ENCODE measurements at regions of chr7 and their contacts with region 1.

Region 1: DNA sequence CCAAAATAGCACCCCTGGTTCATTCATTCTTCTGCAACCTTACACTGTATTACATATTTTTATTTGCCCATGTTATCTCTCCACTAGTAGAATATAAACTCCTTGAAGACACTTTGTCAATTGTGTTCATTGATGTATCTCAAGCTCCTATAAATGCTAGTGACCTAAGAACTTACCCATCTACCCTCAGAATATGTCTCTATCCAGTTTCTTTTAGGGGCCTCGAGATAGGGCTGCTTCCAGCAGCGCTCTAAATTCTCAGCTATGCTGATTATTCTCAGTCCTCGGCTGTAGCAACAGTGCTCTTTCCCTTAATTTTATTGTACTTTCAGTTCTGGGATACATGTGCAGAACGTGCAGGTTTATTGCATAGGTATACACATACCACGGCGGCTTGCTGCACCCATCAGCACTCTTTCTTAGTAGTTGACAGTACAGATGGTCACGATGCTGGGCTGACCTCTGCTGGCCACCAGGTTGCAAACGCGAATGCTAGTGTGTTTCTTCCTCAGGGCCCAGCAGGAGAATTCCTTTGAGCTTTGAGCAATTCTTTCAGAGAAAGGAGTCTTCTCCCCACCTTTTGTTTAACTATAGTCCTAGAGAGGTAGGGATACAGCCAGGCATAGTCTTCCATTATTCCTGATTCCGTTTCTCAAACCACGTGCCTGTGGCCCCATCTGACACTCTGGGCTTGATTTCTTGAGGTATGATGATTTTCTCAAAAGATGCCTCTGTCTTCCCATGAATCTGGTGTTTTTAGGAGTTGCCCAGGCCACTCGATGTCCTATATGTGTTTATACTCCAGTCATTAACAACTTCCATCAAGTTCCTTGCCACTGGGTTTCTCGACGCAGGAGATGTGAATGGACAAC is 49.1 kb upstream of the CDC14C start:
- DNase-seq: peak; percentile 77 to 78
- H3K4me3 ChIP-seq: no peak overlapping the region
- H3K4me1 ChIP-seq: no peaks in the 10 kb centered on the region; the same call in 1 of the 2 replicates
- H3K27me3 ChIP-seq: no peaks in the 10 kb centered on the region

Region 2: DNA sequence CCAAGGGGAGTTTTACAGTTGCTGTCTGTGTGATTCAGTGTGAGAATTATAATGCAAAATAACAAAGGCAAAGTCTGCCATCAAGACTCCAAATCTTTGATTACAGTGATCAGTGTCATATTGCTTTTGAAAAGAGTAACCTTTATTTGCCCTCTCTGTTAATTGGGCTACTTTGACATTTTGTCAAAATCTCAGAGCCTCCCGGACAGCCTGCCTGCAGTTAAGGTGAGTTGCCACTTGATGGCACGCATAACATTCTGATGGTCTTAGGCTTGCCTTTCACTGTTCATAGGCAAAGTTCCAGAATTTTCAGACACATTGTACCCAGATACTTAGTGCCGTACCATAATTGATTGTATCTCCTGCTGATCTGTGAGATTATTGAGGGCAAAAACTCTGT is 450.6 kb before region 1 on chr7:
- in situ Hi-C with region 1: loop called (anchors 5 kb)
- DNase-seq: peak; percentile 60 to 65
- H3K4me3 ChIP-seq: no peak overlapping the region
- H3K4me1 ChIP-seq: peaks cover 6% of the 10 kb centered on the region; the same call in 1 of the 2 replicates
- H3K27me3 ChIP-seq: no peaks in the 10 kb centered on the region

Region 3: GRCh38 chr7:49060743-49061142 is 185.5 kb after region 1 on chr7:
- in situ Hi-C with region 1: no loop called
- DNase-seq: no peak
- H3K4me3 ChIP-seq: no peak overlapping the region
- H3K4me1 ChIP-seq: no peaks in the 10 kb centered on the region
- H3K27me3 ChIP-seq: no peaks in the 10 kb centered on the region

Region 4: DNA sequence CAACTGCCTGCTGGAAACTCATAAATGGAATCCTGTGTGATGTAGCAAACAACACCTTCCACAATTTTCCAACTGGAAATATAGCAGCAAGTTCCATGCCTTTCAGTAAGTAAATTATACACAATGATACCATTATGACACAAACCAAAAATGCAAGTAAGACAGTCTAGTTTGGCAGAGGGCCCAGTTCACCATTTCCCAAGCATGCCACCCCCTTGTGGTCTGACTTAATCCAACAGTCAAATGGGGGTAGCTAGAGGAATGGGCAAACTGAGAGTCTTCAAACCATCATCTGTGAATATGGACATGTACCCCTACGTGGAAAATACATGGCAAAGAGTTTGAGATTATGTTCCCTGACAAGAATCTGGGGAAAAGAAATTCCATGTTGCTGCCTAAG is 760.5 kb after region 1 on chr7:
- in situ Hi-C with region 1: no loop called
- DNase-seq: no peak
- H3K4me3 ChIP-seq: no peak overlapping the region
- H3K4me1 ChIP-seq: no peaks in the 10 kb centered on the region
- H3K27me3 ChIP-seq: no peaks in the 10 kb centered on the region